ENCODE measurements at regions of chr21 and their contacts with region 1.

Region 1: DNA sequence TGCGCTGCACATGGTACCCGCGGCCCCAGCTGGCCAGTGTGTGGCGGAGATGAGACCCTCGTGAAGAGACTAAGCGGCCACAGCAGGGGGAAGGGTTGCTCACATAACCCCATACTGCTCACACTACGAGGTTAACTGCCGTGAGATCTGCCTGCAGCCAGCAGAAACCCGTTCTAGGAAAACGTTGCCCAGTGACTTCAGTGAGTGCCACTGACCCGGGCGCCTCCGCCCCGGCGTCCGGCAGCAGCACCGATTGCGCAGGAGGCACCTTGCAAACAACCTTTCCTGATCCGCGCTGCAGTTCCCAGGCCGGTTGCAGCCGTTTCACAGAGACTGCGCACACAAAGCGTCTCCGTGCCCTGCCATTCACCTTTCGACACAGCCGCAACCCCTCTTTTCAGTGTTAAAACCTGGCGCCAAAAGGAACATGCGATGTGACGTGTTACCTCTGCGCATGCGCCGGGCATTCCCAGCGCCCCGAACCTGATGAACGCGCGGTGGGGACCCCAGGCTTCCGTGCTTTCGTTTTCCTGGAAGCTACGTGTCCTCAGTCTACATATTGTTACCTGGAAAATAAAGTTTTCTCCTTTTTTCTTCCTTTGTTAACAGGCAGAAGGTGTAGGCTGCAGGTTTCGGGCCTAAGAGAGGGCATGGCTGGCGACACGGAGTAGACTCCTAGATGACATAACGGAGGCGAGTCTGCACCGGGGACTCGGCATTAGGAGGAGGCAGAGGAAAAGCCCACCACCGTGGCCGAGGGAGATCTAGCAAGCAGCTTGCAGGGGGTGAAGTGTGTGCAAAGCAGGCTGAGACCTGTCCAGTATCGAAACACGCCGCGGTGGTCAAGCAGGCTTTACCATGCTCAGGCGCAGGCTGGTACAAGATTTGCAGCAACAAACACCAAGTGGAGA is 8.9 kb downstream of the VPS26C start:
- DNase-seq: peak; percentile 62
- ATAC-seq: peak; percentile 71 to 74

Region 2: GRCh38 chr21:37220981-37221664 is 37.1 kb before region 1 on chr21:
- intact Hi-C with region 1: loop called in 1 of 2 experiments (anchors 5 kb)
- DNase-seq: peak; percentile 98
- ATAC-seq: peak; percentile 97 to 98